PC-9 (cell line): ENCODE measurements at regions of chr1 and their contacts with region 1.

Region 1: GRCh38 chr1:168082008-168082876 is 54.5 kb downstream of the GPR161 start:
- DNase-seq: peak; percentile 61 to 68
- H3K4me3 ChIP-seq: no peak overlapping the region
- H3K27ac ChIP-seq: no peak overlapping the region
- H3K4me1 ChIP-seq: no peaks in the 10 kb centered on the region
- H3K27me3 ChIP-seq: no peaks in the 10 kb centered on the region
- CTCF ChIP-seq: peak; percentile 90

Region 2: GRCh38 chr1:167553136-167554027 is 528.9 kb before region 1 on chr1 and contains the start of gene CREG1:
- CTCF ChIA-PET with region 1: no interaction called
- POLR2A ChIA-PET with region 1: no interaction called
- intact Hi-C with region 1: loop called (anchors 5 kb)
- DNase-seq: peak; percentile 87 to 94
- H3K4me3 ChIP-seq: peak within 1 kb of the TSS; percentile 76
- H3K27ac ChIP-seq: no peak within 1 kb of the TSS
- H3K4me1 ChIP-seq: peaks cover 24% of the 10 kb centered on the region
- H3K27me3 ChIP-seq: no peaks in the 10 kb centered on the region
- CTCF ChIP-seq: no peak
- total RNA-seq, gene CREG1: 31.6 and 34.6 TPM in 2 replicates

Region 3: GRCh38 chr1:167797015-167797414 is 285.2 kb before region 1 on chr1:
- CTCF ChIA-PET with region 1: interaction called, 3 read pairs
- POLR2A ChIA-PET with region 1: no interaction called
- intact Hi-C with region 1: loop called (anchors 2 kb)
- DNase-seq: peak; percentile 60 to 96
- H3K4me3 ChIP-seq: peak overlapping the region; percentile 18; the same call in 1 of the 2 replicates
- H3K27ac ChIP-seq: peak overlapping the region; percentile 93
- H3K4me1 ChIP-seq: peaks cover 53% of the 10 kb centered on the region
- H3K27me3 ChIP-seq: no peaks in the 10 kb centered on the region
- CTCF ChIP-seq: no peak

Region 4: DNA sequence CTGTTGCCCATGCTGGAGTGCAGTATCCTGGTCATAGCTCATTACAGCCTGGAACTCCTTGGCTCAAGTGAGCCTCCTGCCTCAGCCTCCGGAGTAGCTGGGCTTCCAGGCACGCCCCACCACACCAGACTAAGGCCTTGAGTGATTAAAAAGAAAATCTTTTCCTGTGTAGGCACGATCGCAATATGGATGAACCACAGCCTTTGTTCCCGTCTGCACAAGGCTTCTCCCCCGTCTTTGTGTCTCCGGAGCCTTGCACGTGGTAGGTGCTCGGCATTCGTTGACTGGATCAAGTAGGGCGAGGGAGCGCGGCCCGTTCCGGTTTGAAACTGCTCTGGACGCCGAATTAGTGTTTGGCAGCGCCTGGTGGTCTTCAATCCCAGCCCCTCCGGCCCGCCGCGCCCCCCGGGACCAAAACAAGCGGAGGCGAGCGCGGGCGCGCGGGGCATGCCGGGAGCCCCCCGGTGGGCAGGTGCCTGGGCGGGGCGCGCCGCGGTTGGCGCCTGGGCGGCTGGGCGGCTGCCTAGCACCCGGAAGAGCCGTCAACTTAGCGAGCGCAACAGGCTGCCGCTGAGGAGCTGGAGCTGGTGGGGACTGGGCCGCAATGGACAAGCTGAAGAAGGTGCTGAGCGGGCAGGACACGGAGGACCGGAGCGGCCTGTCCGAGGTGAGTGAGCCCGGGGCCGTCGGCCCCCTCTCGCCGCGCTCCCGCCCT is 143.4 kb after region 1 on chr1 and contains the start of gene SFT2D2:
- CTCF ChIA-PET with region 1: no interaction called
- POLR2A ChIA-PET with region 1: no interaction called
- intact Hi-C with region 1: loop called (anchors 10 kb)
- DNase-seq: peak; percentile 63 to 78
- H3K4me3 ChIP-seq: peak within 1 kb of the TSS; percentile 88
- H3K27ac ChIP-seq: peak within 1 kb of the TSS; percentile 70
- H3K4me1 ChIP-seq: peaks cover 63% of the 10 kb centered on the region
- H3K27me3 ChIP-seq: no peaks in the 10 kb centered on the region
- CTCF ChIP-seq: no peak
- total RNA-seq, gene SFT2D2: 54.4 and 66.8 TPM in 2 replicates